PC-3 (cell line): ENCODE measurements at regions of chr7 and their contacts with region 1.

Region 1: DNA sequence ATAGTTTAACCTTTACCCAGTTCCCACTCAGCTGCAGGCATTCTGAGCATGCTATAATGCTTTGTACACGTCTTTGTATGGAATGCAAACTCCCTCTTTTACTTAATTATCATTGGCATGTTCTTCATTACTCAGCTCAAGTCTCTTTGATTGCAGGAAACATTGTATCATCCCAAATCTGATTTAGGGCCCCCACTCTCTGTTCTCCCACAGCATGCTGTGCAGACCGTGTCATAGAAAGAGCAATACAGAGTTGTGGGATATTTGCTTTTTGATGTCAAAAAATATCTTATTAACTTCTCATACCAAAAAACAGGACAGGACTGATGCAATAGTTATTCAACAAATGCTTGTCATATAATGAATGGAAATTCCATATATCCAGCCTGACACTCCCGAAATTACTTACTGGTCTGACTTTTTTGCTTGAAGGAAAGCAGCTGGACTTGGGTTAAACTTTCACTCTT is 1081.5 kb upstream of the C7orf33 start:
- DNase-seq: peak; percentile 35
- ATAC-seq: no peak
- H3K4me3 ChIP-seq: no peak overlapping the region
- H3K27ac ChIP-seq: peak overlapping the region; percentile 96
- H3K4me1 ChIP-seq: peaks cover 38% of the 10 kb centered on the region
- H3K27me3 ChIP-seq: no peaks in the 10 kb centered on the region
- CTCF ChIP-seq: no peak

Region 2: GRCh38 chr7:147298611-147299043 is 210.4 kb before region 1 on chr7:
- CTCF ChIA-PET with region 1: no interaction called
- POLR2A ChIA-PET with region 1: no interaction called
- intact Hi-C with region 1: loop called (anchors 5 kb)
- DNase-seq: peak; percentile 65
- ATAC-seq: peak; percentile 62
- H3K4me3 ChIP-seq: no peak overlapping the region
- H3K27ac ChIP-seq: 0 out of 2 replicates have a peak overlapping the region, but pooled peaks have one; percentile 2
- H3K4me1 ChIP-seq: peaks cover 22% of the 10 kb centered on the region
- H3K27me3 ChIP-seq: no peaks in the 10 kb centered on the region
- CTCF ChIP-seq: no peak

Region 3: GRCh38 chr7:147432079-147432478 is 77.0 kb before region 1 on chr7:
- CTCF ChIA-PET with region 1: interaction called, 3 read pairs
- POLR2A ChIA-PET with region 1: no interaction called
- intact Hi-C with region 1: loop called (anchors 5 kb)
- DNase-seq: peak; percentile 56
- ATAC-seq: peak; percentile 26; the same call in 1 of the 2 replicates
- H3K4me3 ChIP-seq: no peak overlapping the region
- H3K27ac ChIP-seq: no peak overlapping the region
- H3K4me1 ChIP-seq: peaks cover 17% of the 10 kb centered on the region
- H3K27me3 ChIP-seq: no peaks in the 10 kb centered on the region
- CTCF ChIP-seq: peak; percentile 74

Region 4: GRCh38 chr7:147570390-147570789 is 61.3 kb after region 1 on chr7:
- CTCF ChIA-PET with region 1: interaction called, 3 read pairs
- POLR2A ChIA-PET with region 1: interaction called, 4 read pairs
- intact Hi-C with region 1: loop called (anchors 1 kb)
- DNase-seq: peak; percentile 96
- ATAC-seq: peak; percentile 73
- H3K4me3 ChIP-seq: 0 out of 2 replicates have a peak overlapping the region, but pooled peaks have one; percentile 5
- H3K27ac ChIP-seq: peak overlapping the region; percentile 87
- H3K4me1 ChIP-seq: peaks cover 37% of the 10 kb centered on the region
- H3K27me3 ChIP-seq: no peaks in the 10 kb centered on the region
- CTCF ChIP-seq: no peak

Region 5: DNA sequence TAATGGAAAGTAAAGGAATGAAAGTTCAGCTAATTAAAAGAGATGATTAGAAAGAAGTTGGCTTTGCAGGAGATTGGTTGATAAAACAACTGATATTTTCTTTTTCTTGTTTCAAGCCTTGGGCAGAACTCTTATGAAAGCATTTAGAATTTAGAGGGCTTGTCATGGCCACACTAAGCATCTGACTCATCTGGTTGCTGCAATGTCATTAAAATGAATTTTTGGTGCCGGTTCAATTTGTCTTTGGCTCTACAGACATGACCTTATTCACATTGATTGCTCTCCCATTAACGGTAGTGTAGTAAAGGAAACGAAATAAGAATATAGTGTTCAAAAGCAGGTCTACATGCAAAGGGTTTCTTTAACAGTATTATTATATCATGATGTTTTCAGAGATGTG is 69.1 kb after region 1 on chr7:
- CTCF ChIA-PET with region 1: no interaction called
- POLR2A ChIA-PET with region 1: no interaction called
- intact Hi-C with region 1: loop called (anchors 2 kb)
- DNase-seq: peak; percentile 77
- ATAC-seq: peak; percentile 62
- H3K4me3 ChIP-seq: no peak overlapping the region
- H3K27ac ChIP-seq: peak overlapping the region; percentile 42
- H3K4me1 ChIP-seq: peaks cover 38% of the 10 kb centered on the region
- H3K27me3 ChIP-seq: no peaks in the 10 kb centered on the region
- CTCF ChIP-seq: no peak

Region 6: DNA sequence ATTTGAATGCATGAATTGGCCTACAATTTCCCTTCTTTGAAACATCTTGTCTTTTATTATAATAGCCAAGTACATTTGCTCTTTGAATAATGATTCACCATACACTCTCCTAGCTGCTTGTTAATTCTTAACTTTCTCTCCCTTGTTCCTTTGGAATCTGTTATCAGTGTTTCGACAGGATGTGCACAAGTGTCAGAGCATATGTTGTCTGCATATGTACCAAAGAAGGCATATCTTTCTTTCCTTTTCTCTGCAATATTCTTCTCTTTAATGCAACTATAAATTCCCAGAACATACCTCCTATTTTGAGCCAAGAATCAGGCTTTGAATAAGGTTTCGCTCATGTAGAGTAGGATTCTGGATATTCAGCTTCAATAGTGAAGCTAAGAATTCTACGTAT is 233.2 kb after region 1 on chr7:
- CTCF ChIA-PET with region 1: no interaction called
- POLR2A ChIA-PET with region 1: no interaction called
- intact Hi-C with region 1: no loop called
- DNase-seq: no peak
- ATAC-seq: no peak
- H3K4me3 ChIP-seq: no peak overlapping the region
- H3K27ac ChIP-seq: no peak overlapping the region
- H3K4me1 ChIP-seq: no peaks in the 10 kb centered on the region
- H3K27me3 ChIP-seq: no peaks in the 10 kb centered on the region
- CTCF ChIP-seq: no peak